ENCODE measurements at regions of chr1 and their contacts with region 1.

Region 1: GRCh38 chr1:248837794-248838356 is at the start of gene ZNF672:
- DNase-seq: peak; percentile 98 to 100 (median 99)
- ATAC-seq: peak; percentile 93 to 95 (median 94)
- H3K4me3 ChIP-seq: peak within 1 kb of the TSS; percentile 64 to 99 (median 86)
- H3K27ac ChIP-seq: peak within 1 kb of the TSS; percentile 97 to 100 (median 100)
- H3K4me1 ChIP-seq: peaks cover 0 to 52% (median 34%) of the 10 kb centered on the region in 12 donors
- H3K27me3 ChIP-seq: no peaks in the 10 kb centered on the region
- CTCF ChIP-seq: no peak
- POLR2A ChIP-seq: peak; percentile 57 to 80
- total RNA-seq, gene ZNF672: 27.9 to 63.8 (median 37.8) TPM

Region 2: GRCh38 chr1:248825909-248826760 is 11.7 kb before region 1 on chr1 and contains the start of gene SH3BP5L:
- intact Hi-C with region 1: loop called in 4 of 10 experiments (anchors 1 kb)
- DNase-seq: peak; percentile 93 to 96 (median 95)
- ATAC-seq: peak; percentile 95 to 97 (median 97)
- H3K4me3 ChIP-seq: peak within 1 kb of the TSS; percentile 55 to 89 (median 76)
- H3K27ac ChIP-seq: peak within 1 kb of the TSS; percentile 91 to 99 (median 95)
- H3K4me1 ChIP-seq: peaks cover 19 to 63% (median 48%) of the 10 kb centered on the region in 12 donors
- H3K27me3 ChIP-seq: no peaks in the 10 kb centered on the region
- CTCF ChIP-seq: peak; percentile 23 to 88 (median 64)
- POLR2A ChIP-seq: peak in 1 of 2 donors; percentile 70
- total RNA-seq, gene SH3BP5L: 15.8 to 47.1 (median 19.3) TPM

Region 3: GRCh38 chr1:248853663-248854375 is 15.9 kb after region 1 on chr1:
- intact Hi-C with region 1: loop called in 9 of 10 experiments (anchors 1 to 2 kb)
- DNase-seq: no peak
- ATAC-seq: no peak
- H3K4me3 ChIP-seq: no peak overlapping the region
- H3K27ac ChIP-seq: no peak overlapping the region
- H3K4me1 ChIP-seq: peaks cover 0 to 35% (median 11%) of the 10 kb centered on the region in 12 donors
- H3K27me3 ChIP-seq: no peaks in the 10 kb centered on the region
- CTCF ChIP-seq: no peak
- POLR2A ChIP-seq: no peak

Region 4: DNA sequence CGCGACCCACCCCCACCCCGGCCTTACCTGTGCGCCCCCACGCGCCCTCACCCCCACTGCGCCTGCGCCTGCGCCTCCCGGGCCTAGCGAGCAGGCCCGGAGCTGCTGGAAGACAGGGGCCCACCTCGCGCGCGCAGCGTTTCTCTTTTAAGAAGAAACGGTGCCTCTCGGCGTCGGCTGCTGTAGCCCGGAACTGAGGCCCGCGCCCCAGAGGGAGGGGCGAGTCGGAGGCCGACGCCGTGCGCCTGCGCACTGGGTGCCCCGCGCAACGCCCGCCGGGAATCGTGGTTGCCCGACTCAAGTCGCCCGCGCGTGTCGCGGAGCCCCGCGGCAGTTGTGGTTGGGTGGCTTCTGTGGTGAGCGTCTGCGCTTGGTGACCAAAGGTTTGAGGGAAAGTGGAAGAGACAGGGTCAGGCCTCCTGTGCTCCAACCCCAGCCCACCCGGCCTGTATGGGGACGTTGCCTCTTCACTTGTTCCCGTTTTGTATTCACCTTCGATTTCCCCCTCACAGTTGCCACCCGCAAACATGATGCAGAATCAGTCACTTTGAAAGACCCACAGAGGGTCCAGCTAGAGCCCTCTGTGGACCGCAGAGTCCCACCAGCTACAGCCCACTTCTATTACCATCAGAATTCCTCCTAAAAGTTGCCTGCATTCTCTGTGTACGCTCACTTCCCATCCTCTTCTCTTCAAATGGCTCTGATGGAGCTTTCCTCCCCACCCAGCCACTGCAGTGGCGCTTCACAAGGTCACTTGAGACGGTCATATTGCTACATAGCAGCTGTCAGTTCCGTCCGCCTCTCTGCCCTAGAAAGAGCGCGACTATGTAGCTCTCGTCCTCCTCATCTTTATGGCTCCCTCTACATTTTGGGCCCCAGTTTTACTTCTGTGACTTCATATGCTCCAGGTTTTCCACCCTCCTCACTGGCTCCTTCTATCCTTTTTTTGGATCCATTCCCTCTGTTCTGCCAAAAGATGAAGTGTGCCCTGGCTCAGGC is 21.3 kb after region 1 on chr1 and contains the start of gene ZNF692:
- intact Hi-C with region 1: loop called in 9 of 10 experiments (anchors 1 to 2 kb)
- DNase-seq: peak; percentile 97 to 99 (median 99)
- ATAC-seq: peak; percentile 89 to 93 (median 92)
- H3K4me3 ChIP-seq: peak within 1 kb of the TSS; percentile 45 to 75 (median 65)
- H3K27ac ChIP-seq: peak within 1 kb of the TSS; percentile 60 to 96 (median 92)
- H3K4me1 ChIP-seq: peaks cover 0 to 43% (median 31%) of the 10 kb centered on the region in 12 donors
- H3K27me3 ChIP-seq: no peaks in the 10 kb centered on the region
- CTCF ChIP-seq: peak in 2 of 12 donors; percentile 2 to 4
- POLR2A ChIP-seq: peak in 1 of 2 donors; percentile 85
- total RNA-seq, gene ZNF692: 7.4 to 19.7 (median 14.8) TPM

Region 5: DNA sequence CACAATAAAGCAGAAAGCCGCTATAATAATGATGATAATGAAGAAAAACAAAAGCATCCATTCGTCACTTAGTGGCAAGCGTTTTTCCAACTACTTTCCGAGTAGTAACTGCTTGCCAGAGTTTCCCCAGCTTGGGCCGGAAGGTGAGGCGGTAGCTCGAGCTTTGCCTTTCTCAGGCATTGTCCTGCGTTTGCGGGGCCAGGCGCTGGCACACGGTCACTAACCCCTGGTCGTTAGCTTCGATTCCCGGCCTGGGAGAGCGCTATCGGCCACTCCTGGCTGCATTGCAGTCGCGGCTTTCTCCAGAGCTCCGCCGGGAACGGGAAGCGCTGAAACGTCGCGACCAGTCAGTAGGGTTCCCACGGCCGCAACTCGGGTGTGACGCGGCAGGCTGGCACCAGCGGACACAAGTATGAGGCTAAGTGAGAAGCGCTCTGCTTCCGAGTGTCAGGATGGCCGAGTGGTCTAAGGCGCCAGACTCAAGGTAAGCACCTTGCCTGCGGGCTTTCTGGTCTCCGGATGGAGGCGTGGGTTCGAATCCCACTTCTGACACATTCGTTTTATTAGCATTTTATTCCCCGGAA is 35.6 kb after region 1 on chr1:
- intact Hi-C with region 1: loop called in 2 of 10 experiments (anchors 1 kb)
- DNase-seq: peak; percentile 92 to 95 (median 93)
- ATAC-seq: peak; percentile 92 to 95 (median 94)
- H3K4me3 ChIP-seq: peak overlapping the region; percentile 56 to 84 (median 70)
- H3K27ac ChIP-seq: peak overlapping the region; percentile 88 to 96 (median 93)
- H3K4me1 ChIP-seq: peaks cover 0 to 12% (median 0%) of the 10 kb centered on the region in 12 donors
- H3K27me3 ChIP-seq: no peaks in the 10 kb centered on the region
- CTCF ChIP-seq: no peak
- POLR2A ChIP-seq: peak in 1 of 2 donors; percentile 50

Region 6: GRCh38 chr1:248906009-248906752 is 68.3 kb after region 1 on chr1 and contains the start of gene PGBD2:
- intact Hi-C with region 1: loop called in 2 of 10 experiments (anchors 2 kb)
- DNase-seq: peak; percentile 93 to 97 (median 95)
- ATAC-seq: peak; percentile 91 to 97 (median 95)
- H3K4me3 ChIP-seq: peak within 1 kb of the TSS; percentile 53 to 94 (median 78)
- H3K27ac ChIP-seq: peak within 1 kb of the TSS; percentile 88 to 99 (median 95)
- H3K4me1 ChIP-seq: peaks cover 0 to 18% (median 13%) of the 10 kb centered on the region in 12 donors
- H3K27me3 ChIP-seq: peaks cover 0 to 5% (median 0%) of the 10 kb centered on the region in 9 donors
- CTCF ChIP-seq: peak; percentile 44 to 80 (median 62)
- POLR2A ChIP-seq: peak in 1 of 2 donors; percentile 86
- total RNA-seq, gene PGBD2: 1.5 to 3.9 (median 2.6) TPM